Activated T-helper 1 cell treated with anti-CD3 and anti-CD28 coated beads, Interleukin-12 subunit alpha, Interleukin-12 subunit beta, Interleukin-2, Interleukin-4 antibody, amounts not matched to agents 30 ng/mL and 10 ng/mL and 1 ng/mL, durations not matched to agents 14 hours and 24 hours and 36 hours (primary cell): ENCODE measurements at regions of chr11 and their contacts with region 1.

Region 1: GRCh38 chr11:9314291-9315036 is at the start of gene TMEM41B:
- DNase-seq: peak; percentile 98
- H3K4me3 Mint-ChIP-seq: peak within 1 kb of the TSS; percentile 99
- H3K27ac Mint-ChIP-seq: peak within 1 kb of the TSS; percentile 97
- H3K4me1 Mint-ChIP-seq: peaks cover 37% of the 10 kb centered on the region
- H3K27me3 Mint-ChIP-seq: peaks cover 11% of the 10 kb centered on the region
- total RNA-seq, gene TMEM41B: 26.1 and 28.8 TPM in 2 replicates

Region 2: DNA sequence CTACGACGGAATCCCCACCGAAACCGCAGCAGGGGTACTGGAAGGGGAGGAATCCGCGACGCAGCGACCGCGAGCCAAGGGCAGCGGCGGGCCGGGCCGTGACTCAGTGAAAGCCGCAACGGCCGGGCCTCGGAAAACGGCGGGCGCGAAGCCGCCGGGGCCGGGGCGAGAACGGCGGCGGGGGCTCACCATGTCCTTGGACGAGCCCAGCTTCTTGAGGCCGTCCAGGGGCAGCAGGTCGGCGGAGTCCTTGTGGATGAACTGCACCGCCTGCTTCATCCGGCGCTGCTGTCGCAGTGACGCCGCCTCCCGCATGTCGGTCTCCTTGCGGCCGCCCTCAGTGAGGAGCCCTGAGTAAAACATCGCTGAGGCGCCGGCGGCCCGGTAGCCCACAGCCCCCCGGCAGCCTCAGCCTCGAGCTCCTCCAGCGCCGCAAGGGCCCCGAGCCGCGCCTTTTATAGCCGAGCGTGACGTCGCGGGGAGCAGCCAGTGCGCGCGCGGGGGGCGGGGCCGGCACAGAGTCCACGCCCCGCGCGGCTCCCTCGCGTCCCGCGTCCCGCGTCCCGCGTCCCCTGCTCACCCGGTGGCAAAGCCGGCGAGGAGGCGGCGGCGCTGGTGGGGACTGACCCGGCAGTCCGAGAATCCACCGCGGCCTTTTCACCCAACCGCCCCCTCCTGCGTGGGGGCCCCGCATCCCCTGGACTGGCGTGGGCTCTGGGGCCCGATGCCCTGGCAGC is 310.7 kb before region 1 on chr11 and contains the start of gene NRIP3:
- intact Hi-C with region 1: loop called (anchors 2 kb)
- DNase-seq: peak; percentile 73
- H3K4me3 Mint-ChIP-seq: peak within 1 kb of the TSS; percentile 83
- H3K27ac Mint-ChIP-seq: peak within 1 kb of the TSS; percentile 76
- H3K4me1 Mint-ChIP-seq: peaks cover 31% of the 10 kb centered on the region
- H3K27me3 Mint-ChIP-seq: peaks cover 36% of the 10 kb centered on the region
- total RNA-seq, gene NRIP3: 4.4 and 4.8 TPM in 2 replicates

Region 3: DNA sequence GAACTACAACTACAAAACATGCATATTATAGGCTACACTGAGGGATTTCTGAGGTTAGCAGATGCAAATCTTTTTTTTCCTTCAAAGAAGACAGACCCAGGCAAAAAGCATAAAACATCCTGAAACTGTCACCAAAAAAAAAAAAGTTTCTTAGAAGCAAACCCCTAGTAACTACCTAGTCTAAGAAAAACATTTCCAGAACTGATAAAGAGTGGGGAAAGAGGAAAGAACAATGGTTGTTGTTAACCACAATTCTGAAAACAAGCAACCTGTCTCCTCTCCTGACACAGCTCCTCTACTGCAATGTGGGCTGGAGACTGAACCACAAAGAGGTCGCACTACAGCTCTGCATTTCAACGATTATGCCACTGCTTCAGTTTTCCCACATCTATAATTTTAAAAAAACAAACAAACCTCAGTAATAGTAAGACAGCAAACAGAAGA is 64.3 kb before region 1 on chr11:
- intact Hi-C with region 1: loop called (anchors 1 kb)
- DNase-seq: peak; percentile 36
- H3K4me3 Mint-ChIP-seq: peak overlapping the region; percentile 38
- H3K27ac Mint-ChIP-seq: peak overlapping the region; percentile 50
- H3K4me1 Mint-ChIP-seq: peaks cover 61% of the 10 kb centered on the region
- H3K27me3 Mint-ChIP-seq: peaks cover 1% of the 10 kb centered on the region

Region 4: GRCh38 chr11:9344061-9344680 is 29.7 kb after region 1 on chr11:
- intact Hi-C with region 1: loop called (anchors 2 kb)
- DNase-seq: no peak
- H3K4me3 Mint-ChIP-seq: no peak overlapping the region
- H3K27ac Mint-ChIP-seq: no peak overlapping the region
- H3K4me1 Mint-ChIP-seq: peaks cover 25% of the 10 kb centered on the region
- H3K27me3 Mint-ChIP-seq: peaks cover 11% of the 10 kb centered on the region

Region 5: DNA sequence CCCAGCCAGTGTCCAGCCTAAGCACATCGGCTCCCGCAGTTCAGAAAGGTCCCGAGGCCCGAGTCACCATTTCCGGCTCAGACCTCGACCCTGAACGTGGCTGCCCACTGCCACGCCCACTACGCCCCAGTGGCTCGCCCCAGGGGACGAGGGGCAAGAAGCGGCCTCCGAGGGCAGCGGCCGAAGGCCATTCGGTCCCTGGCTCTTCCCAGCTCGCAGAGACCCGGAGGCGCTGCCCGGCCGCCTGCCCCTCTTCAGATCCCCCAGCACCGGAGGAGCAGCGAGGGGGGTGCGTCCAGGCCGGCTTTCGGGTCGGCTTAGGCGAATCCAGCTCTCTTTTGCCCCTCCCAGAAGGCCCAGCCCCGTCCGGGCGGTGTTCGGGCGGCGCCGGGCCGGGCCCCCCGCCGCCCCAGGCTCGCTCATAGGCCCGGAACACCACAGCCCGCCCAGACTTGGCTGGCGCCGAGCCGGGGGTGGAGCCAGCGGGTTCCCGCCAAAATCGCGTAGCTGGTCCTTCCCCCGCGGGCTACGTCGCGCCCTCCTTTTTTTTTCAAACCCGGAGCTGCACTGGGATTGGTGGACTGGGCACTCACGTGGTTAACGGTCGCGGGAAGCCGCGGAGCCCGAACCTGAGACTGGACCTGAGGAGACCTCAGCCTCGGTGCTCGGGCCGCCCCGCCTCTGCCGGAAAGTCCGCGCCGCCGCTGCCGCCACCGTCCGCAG is 258.7 kb after region 1 on chr11 and contains the start of gene WEE1:
- intact Hi-C with region 1: loop called (anchors 1 kb)
- DNase-seq: peak; percentile 99
- H3K4me3 Mint-ChIP-seq: peak within 1 kb of the TSS; percentile 93
- H3K27ac Mint-ChIP-seq: peak within 1 kb of the TSS; percentile 88
- H3K4me1 Mint-ChIP-seq: peaks cover 42% of the 10 kb centered on the region
- H3K27me3 Mint-ChIP-seq: peaks cover 7% of the 10 kb centered on the region
- total RNA-seq, gene WEE1: 51.4 and 54.2 TPM in 2 replicates